PC-9 (cell line): ENCODE measurements at regions of chr2 and their contacts with region 1.

Region 1: DNA sequence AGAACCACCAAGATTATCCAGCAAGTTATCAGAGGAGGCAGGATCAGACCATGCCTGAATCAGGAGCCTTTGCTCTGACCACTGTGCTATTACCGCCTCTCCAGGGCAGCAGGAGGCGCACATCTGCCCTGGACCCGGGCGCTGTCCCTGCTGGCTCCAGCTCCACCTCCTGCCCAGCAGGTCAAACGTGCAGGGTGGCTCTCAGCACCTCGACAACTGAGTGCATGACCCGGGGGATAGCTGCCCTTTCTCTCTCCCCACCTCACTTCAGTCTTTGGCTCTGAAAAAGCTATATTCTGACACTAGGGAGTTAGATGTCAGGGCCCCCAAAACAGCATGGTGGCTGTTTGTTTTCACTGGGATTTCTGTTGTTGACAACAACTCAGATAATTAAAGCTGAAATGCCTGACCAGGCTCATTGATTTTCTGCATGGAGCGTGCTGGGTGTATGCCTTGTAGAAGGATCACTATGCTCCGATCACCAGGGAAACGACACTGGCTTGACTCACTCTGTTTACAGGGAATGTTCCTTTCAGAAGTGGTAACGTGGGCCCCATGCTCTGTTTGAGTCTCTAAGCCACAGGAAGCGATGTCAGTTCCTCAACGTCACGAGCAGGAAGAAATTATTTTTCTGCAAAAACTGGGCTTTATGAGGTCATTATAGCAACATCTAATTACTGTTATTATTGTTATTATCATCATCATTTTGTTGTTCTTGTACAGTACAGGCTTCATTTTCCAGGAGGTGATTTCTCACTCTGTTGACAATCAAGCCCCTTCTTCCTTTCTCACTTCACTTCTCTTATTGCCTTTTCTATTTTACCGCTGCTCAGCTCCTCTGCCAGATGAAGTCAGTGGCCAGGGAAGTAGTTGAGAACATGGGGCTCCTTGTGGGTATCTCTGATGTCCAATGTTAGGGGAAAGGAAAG is 125.6 kb downstream of the PLB1 start:
- DNase-seq: peak; percentile 75 to 98
- H3K4me3 ChIP-seq: peak overlapping the region; percentile 28; the same call in 1 of the 2 replicates
- H3K27ac ChIP-seq: peak overlapping the region; percentile 88
- H3K4me1 ChIP-seq: peaks cover 82% of the 10 kb centered on the region
- H3K27me3 ChIP-seq: no peaks in the 10 kb centered on the region
- CTCF ChIP-seq: peak; percentile 79

Region 2: DNA sequence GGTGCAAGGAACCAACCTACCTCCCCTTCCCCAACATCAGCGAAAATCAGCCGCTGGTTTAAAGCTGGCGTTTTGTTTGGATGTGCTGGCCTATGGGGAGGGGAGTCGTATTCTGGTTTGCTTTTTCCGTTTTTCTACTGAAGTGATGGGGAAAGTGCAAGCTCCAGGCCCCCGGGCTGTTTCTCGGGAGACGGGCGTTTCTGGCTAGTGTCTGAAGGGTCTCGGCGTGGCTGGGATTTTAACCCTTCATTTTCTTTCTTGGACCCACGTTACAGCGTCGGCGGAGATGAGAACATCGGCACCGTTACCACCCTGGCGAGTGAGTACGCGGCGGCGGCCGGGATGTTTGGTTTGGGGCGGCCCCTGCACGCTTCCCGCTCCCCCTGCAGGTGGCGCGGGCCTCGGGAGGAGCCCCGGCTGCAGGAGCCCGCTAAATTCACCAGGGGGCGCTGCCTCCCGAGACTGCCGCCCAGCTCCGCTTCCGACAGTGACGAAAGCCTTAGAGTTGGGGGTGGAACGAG is 54.9 kb before region 1 on chr2:
- CTCF ChIA-PET with region 1: no interaction called
- POLR2A ChIA-PET with region 1: no interaction called
- intact Hi-C with region 1: loop called (anchors 2 kb)
- DNase-seq: peak; percentile 64 to 89
- H3K4me3 ChIP-seq: peak overlapping the region; percentile 79
- H3K27ac ChIP-seq: no peak overlapping the region
- H3K4me1 ChIP-seq: peaks cover 6% of the 10 kb centered on the region
- H3K27me3 ChIP-seq: no peaks in the 10 kb centered on the region
- CTCF ChIP-seq: peak; percentile 100

Region 3: GRCh38 chr2:28594289-28595108 is 26.9 kb before region 1 on chr2:
- CTCF ChIA-PET with region 1: interaction called, 5 read pairs
- POLR2A ChIA-PET with region 1: no interaction called
- intact Hi-C with region 1: loop called (anchors 1 kb)
- DNase-seq: peak; percentile 94 to 95
- H3K4me3 ChIP-seq: no peak overlapping the region; the same call in 1 of the 2 replicates
- H3K27ac ChIP-seq: peak overlapping the region; percentile 69
- H3K4me1 ChIP-seq: peaks cover 40% of the 10 kb centered on the region
- H3K27me3 ChIP-seq: no peaks in the 10 kb centered on the region
- CTCF ChIP-seq: peak; percentile 91

Region 4: GRCh38 chr2:28633746-28634145 is 12.3 kb after region 1 on chr2:
- CTCF ChIA-PET with region 1: no interaction called
- POLR2A ChIA-PET with region 1: interaction called, 11 read pairs
- intact Hi-C with region 1: no loop called
- DNase-seq: peak; percentile 83 to 98
- H3K4me3 ChIP-seq: no peak overlapping the region
- H3K27ac ChIP-seq: peak overlapping the region; percentile 85
- H3K4me1 ChIP-seq: peaks cover 28% of the 10 kb centered on the region
- H3K27me3 ChIP-seq: no peaks in the 10 kb centered on the region
- CTCF ChIP-seq: no peak

Region 5: GRCh38 chr2:28649481-28650214 is 28.2 kb after region 1 on chr2:
- CTCF ChIA-PET with region 1: interaction called, 3 read pairs
- POLR2A ChIA-PET with region 1: interaction called, 19 read pairs
- intact Hi-C with region 1: no loop called
- DNase-seq: peak; percentile 74 to 93
- H3K4me3 ChIP-seq: peak overlapping the region; percentile 7; the same call in 1 of the 2 replicates
- H3K27ac ChIP-seq: peak overlapping the region; percentile 87
- H3K4me1 ChIP-seq: peaks cover 61% of the 10 kb centered on the region
- H3K27me3 ChIP-seq: no peaks in the 10 kb centered on the region
- CTCF ChIP-seq: no peak

Region 6: GRCh38 chr2:28716265-28716867 is 94.9 kb after region 1 on chr2:
- CTCF ChIA-PET with region 1: no interaction called
- POLR2A ChIA-PET with region 1: interaction called, 4 read pairs
- intact Hi-C with region 1: loop called (anchors 1 kb)
- DNase-seq: peak; percentile 60 to 96
- H3K4me3 ChIP-seq: peak overlapping the region; percentile 39; the same call in 1 of the 2 replicates
- H3K27ac ChIP-seq: peak overlapping the region; percentile 90
- H3K4me1 ChIP-seq: peaks cover 69% of the 10 kb centered on the region
- H3K27me3 ChIP-seq: no peaks in the 10 kb centered on the region
- CTCF ChIP-seq: no peak

Region 7: DNA sequence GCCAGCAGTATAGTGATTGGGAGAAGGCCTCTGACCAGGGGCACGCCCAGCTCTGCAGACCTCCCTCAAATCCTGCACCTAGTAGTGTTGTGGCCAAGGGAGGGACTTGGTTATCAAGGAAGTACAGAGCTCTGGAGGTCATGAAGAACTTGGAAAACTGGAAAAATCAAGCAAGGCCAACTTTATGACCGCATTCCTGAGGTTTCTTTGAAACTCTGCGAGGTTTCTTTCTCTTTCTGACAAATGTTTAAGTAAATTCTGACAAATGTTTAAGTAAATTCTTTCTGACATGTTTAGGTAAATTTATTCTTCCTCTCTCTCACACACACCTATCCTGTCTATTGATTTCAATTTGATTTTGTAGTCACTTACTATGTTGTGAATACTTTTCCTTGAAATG is 524.8 kb after region 1 on chr2:
- CTCF ChIA-PET with region 1: no interaction called
- POLR2A ChIA-PET with region 1: no interaction called
- intact Hi-C with region 1: no loop called
- DNase-seq: no peak
- H3K4me3 ChIP-seq: no peak overlapping the region
- H3K27ac ChIP-seq: peak overlapping the region; percentile 5; the same call in 1 of the 2 replicates
- H3K4me1 ChIP-seq: no peaks in the 10 kb centered on the region
- H3K27me3 ChIP-seq: no peaks in the 10 kb centered on the region
- CTCF ChIP-seq: no peak